Endothelial cell of umbilical vein (primary cell): ENCODE measurements at regions of chr4 and their contacts with region 1.

Region 1: GRCh38 chr4:124940387-124940786 is 227.9 kb upstream of the ANKRD50 start:
- DNase-seq: peak; percentile 97
- H3K4me3 ChIP-seq: no peak overlapping the region
- H3K27ac ChIP-seq: peak overlapping the region; percentile 98
- H3K4me1 ChIP-seq: peaks cover 38% of the 10 kb centered on the region
- H3K27me3 ChIP-seq: no peaks in the 10 kb centered on the region
- CTCF ChIP-seq: no peak
- POLR2A ChIP-seq: peak; percentile 29

Region 2: DNA sequence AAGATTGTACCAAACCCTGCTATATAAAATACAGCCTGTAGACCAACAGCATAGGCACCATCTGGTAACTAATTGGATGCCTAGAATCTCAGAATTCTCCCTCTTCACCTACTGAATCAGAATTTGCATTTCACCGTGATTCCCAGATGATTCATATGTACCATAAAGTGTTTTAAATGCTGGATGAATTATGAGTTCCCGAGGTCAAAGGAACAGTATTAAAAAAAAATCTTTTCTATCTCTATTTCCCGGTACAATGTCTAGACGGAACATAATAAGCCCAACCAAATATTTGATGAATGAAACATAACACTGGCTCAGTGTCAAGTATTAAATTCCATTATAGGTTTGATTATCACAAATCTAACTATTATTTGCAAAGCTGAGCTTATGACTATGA is 507.9 kb before region 1 on chr4:
- CTCF ChIA-PET with region 1: no interaction called
- POLR2A ChIA-PET with region 1: no interaction called
- dilution Hi-C with region 1: no loop called
- intact Hi-C with region 1: loop called (anchors 1 kb)
- DNase-seq: peak; percentile 94
- H3K4me3 ChIP-seq: peak overlapping the region in 1 of 3 experiments; percentile 24
- H3K27ac ChIP-seq: peak overlapping the region; percentile 100
- H3K4me1 ChIP-seq: peaks cover 75% of the 10 kb centered on the region
- H3K27me3 ChIP-seq: no peaks in the 10 kb centered on the region
- CTCF ChIP-seq: no peak
- POLR2A ChIP-seq: no peak

Region 3: DNA sequence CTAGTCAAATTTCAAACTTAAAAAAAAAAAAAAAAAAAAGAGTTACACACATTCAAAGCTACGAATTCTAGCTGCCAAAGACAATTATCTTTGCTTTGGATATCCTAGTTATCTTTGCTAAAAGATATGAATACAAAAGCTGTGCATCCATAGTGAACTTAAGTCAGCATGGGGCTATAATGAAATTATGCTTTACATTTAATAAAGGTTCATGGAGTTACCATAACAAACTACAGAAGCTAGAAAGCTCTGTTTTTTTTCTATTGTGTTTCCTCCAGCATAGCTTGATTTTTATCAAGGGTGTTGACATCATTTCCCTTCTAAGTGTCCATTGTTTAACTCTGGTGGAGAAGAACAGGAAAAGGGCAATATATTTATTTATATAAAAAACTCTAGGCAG is 461.9 kb before region 1 on chr4:
- CTCF ChIA-PET with region 1: no interaction called
- POLR2A ChIA-PET with region 1: no interaction called
- dilution Hi-C with region 1: no loop called
- intact Hi-C with region 1: loop called (anchors 2 kb)
- DNase-seq: peak; percentile 89
- H3K4me3 ChIP-seq: no peak overlapping the region
- H3K27ac ChIP-seq: peak overlapping the region; percentile 87
- H3K4me1 ChIP-seq: peaks cover 30% of the 10 kb centered on the region
- H3K27me3 ChIP-seq: no peaks in the 10 kb centered on the region
- CTCF ChIP-seq: no peak
- POLR2A ChIP-seq: no peak

Region 4: GRCh38 chr4:124631760-124632159 is 308.6 kb before region 1 on chr4:
- CTCF ChIA-PET with region 1: no interaction called
- POLR2A ChIA-PET with region 1: no interaction called
- dilution Hi-C with region 1: no loop called
- intact Hi-C with region 1: no loop called
- DNase-seq: peak; percentile 98
- H3K4me3 ChIP-seq: no peak overlapping the region
- H3K27ac ChIP-seq: peak overlapping the region; percentile 70
- H3K4me1 ChIP-seq: peaks cover 29% of the 10 kb centered on the region
- H3K27me3 ChIP-seq: no peaks in the 10 kb centered on the region
- CTCF ChIP-seq: no peak
- POLR2A ChIP-seq: no peak

Region 5: GRCh38 chr4:124641715-124642381 is 298.5 kb before region 1 on chr4:
- CTCF ChIA-PET with region 1: no interaction called
- POLR2A ChIA-PET with region 1: no interaction called
- dilution Hi-C with region 1: no loop called
- intact Hi-C with region 1: loop called (anchors 2 kb)
- DNase-seq: peak; percentile 86
- H3K4me3 ChIP-seq: peak overlapping the region in 1 of 3 experiments; percentile 12
- H3K27ac ChIP-seq: peak overlapping the region; percentile 79
- H3K4me1 ChIP-seq: peaks cover 43% of the 10 kb centered on the region
- H3K27me3 ChIP-seq: no peaks in the 10 kb centered on the region
- CTCF ChIP-seq: no peak
- POLR2A ChIP-seq: no peak

Region 6: DNA sequence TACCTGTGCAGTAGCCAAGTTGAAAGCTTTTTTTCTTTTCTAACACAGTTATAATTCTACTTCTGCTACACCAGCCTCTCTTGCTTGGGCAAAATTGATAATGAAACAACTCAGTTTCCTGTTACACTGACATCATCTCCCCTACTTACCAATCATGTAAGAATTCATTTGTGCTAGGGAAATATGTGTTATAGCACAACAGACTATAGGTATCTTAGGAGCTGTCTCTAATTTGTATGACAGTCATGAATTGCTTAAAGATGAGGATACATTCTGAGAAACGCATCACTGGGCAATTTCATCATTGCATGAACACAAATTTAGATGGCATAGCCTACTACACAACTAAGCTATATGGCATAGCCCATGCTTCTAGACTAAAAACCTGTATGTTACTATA is 18.5 kb after region 1 on chr4:
- CTCF ChIA-PET with region 1: no interaction called
- POLR2A ChIA-PET with region 1: no interaction called
- dilution Hi-C with region 1: no loop called
- intact Hi-C with region 1: no loop called
- DNase-seq: peak; percentile 9
- H3K4me3 ChIP-seq: no peak overlapping the region
- H3K27ac ChIP-seq: no peak overlapping the region
- H3K4me1 ChIP-seq: peaks cover 3% of the 10 kb centered on the region
- H3K27me3 ChIP-seq: no peaks in the 10 kb centered on the region
- CTCF ChIP-seq: no peak
- POLR2A ChIP-seq: no peak

Region 7: DNA sequence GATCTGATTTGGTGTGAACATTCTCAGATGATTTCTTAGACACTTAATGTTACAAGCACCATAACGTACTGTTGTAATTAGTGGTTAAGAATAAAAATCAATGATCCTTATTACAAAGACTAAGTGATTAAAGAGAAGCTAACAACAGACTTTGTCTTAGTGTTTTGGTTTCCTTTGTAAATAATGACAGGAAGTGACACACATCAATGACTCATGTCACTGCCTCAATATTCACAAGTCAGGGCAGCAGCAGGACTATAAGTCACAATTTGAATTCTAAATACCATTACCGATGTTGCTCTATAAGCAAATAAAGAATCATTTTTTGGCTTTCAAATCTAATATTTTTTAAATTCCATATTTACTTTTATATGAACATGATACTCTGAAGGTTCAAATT is 258.5 kb after region 1 on chr4:
- CTCF ChIA-PET with region 1: no interaction called
- POLR2A ChIA-PET with region 1: no interaction called
- dilution Hi-C with region 1: no loop called
- intact Hi-C with region 1: loop called (anchors 2 kb)
- DNase-seq: peak; percentile 84
- H3K4me3 ChIP-seq: no peak overlapping the region
- H3K27ac ChIP-seq: peak overlapping the region; percentile 90
- H3K4me1 ChIP-seq: peaks cover 18% of the 10 kb centered on the region
- H3K27me3 ChIP-seq: no peaks in the 10 kb centered on the region
- CTCF ChIP-seq: no peak
- POLR2A ChIP-seq: no peak

Region 8: DNA sequence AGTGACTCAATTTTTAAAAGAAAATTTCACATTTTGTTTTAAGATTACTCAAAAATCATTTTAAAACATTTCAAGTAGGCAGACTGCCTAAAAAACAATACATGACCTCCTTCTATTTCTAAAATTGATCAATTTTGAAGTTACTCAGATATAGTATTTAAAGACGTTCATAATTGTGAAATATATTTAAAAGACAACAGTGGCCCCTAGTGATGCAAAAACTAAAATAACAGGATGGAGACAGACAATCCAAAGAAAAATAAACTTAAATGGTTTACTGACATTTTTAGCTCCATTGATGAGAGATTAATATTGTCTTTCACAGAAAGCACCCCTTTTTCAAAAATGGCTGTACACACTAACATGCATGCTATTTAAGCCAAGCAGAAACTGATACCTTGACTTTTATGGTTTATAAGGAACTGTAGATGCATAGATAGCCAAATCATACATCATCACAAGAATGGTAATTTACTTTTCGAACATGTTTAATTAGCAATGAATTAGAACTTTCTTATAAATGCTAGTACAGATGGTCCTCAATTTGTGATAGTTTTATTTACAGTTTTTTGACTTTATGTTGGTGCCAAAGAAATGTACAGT is 304.6 kb after region 1 on chr4:
- CTCF ChIA-PET with region 1: no interaction called
- POLR2A ChIA-PET with region 1: no interaction called
- dilution Hi-C with region 1: no loop called
- intact Hi-C with region 1: loop called (anchors 2 kb)
- DNase-seq: peak; percentile 59
- H3K4me3 ChIP-seq: no peak overlapping the region
- H3K27ac ChIP-seq: no peak overlapping the region
- H3K4me1 ChIP-seq: peaks cover 11% of the 10 kb centered on the region
- H3K27me3 ChIP-seq: no peaks in the 10 kb centered on the region
- CTCF ChIP-seq: peak in 1 of 2 donors; percentile 20
- POLR2A ChIP-seq: no peak

Region 9: DNA sequence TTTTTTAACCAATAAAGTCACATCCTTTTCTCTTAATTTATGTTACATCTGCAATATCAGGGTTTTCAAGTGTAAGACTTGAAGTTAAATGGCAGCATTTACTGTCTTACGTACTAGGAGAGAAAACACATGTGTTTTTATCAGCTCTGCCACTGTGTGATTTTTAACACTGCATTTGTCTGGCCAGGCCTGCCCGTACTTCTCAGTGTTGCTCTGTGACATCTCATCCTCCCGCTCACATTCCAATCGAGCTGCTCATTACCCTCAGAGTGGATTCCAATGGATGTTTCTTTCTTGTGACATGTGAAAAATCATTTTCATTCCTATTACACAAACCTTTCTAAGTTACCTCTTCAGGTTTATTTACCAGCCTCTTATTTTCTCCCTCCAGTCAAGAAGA is 794.7 kb after region 1 on chr4:
- CTCF ChIA-PET with region 1: no interaction called
- POLR2A ChIA-PET with region 1: no interaction called
- dilution Hi-C with region 1: no loop called
- intact Hi-C with region 1: loop called (anchors 10 kb)
- DNase-seq: peak; percentile 84
- H3K4me3 ChIP-seq: no peak overlapping the region
- H3K27ac ChIP-seq: peak overlapping the region; percentile 91
- H3K4me1 ChIP-seq: peaks cover 41% of the 10 kb centered on the region
- H3K27me3 ChIP-seq: no peaks in the 10 kb centered on the region
- CTCF ChIP-seq: no peak
- POLR2A ChIP-seq: no peak